CD4-positive, alpha-beta T cell (primary cell): ENCODE measurements at regions of chr17 and their contacts with region 1.

Region 1: DNA sequence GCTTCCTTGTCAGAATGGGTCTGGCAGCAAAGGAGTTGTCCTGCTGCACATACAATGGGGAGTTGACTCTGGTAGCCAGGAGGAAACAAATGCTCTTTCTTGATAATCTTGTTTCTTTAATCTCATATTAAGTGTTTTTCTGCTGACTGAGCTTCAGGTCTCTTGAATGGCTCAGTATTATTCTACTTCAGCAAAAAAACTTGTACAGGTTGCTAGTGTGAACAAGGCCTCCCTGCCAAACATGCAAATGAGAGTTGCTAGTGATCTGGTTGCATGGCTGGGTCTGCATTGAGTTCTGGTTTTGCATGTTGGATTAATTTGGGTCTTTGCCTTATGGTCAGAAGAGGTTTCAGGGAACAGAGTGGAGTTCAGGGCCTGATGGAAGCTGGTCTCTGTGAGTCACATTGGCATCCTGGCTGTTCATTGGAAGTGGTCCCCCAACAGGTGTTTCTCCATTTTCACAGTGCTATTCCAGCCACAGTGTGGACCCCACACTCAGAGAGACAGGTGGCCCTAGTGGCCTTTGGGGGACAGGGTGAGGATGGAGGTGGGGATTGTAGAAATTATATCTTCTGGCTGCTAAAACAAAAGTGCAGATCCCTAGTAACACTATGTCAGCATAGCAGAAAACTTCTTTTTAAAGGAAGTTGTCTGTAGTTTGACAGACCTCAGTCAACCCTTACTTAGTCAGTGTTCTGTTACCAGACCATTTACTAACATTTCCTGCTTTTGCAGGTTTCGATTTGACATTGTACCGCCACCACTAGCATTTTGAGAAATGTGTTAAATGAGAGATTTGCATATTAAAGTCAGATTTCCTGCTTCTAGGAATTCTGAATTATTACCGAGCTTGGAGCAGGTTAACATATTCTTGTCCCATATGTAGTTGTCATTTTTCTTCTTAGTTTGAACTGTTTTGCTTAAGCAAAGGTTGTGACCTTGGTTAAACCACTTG is 47.1 kb downstream of the EPN2 start:
- DNase-seq: peak in 2 of 14 experiments; percentile 12 to 40
- ATAC-seq: peak; percentile 34
- H3K4me3 ChIP-seq: no peak overlapping the region
- H3K4me3 Mint-ChIP-seq: no peak overlapping the region
- H3K27ac ChIP-seq: no peak overlapping the region
- H3K27ac Mint-ChIP-seq: peak overlapping the region; percentile 52
- H3K4me1 ChIP-seq: peaks cover 16% of the 10 kb centered on the region
- H3K4me1 Mint-ChIP-seq: peaks cover 15% of the 10 kb centered on the region
- H3K27me3 ChIP-seq: no peaks in the 10 kb centered on the region
- H3K27me3 Mint-ChIP-seq: peaks cover 10% of the 10 kb centered on the region
- CTCF ChIP-seq: no peak

Region 2: GRCh38 chr17:19260958-19261357 is 23.3 kb before region 1 on chr17:
- CTCF ChIA-PET with region 1: no interaction called
- POLR2A ChIA-PET with region 1: no interaction called
- intact Hi-C with region 1: loop called in 1 of 2 experiments (anchors 1 kb)
- DNase-seq: no peak
- ATAC-seq: no peak
- H3K4me3 ChIP-seq: no peak overlapping the region
- H3K4me3 Mint-ChIP-seq: no peak overlapping the region
- H3K27ac ChIP-seq: no peak overlapping the region
- H3K27ac Mint-ChIP-seq: no peak overlapping the region
- H3K4me1 ChIP-seq: no peaks in the 10 kb centered on the region
- H3K4me1 Mint-ChIP-seq: no peaks in the 10 kb centered on the region
- H3K27me3 ChIP-seq: peaks cover 0 to 3% of the 10 kb centered on the region in 2 experiments
- H3K27me3 Mint-ChIP-seq: peaks cover 35% of the 10 kb centered on the region
- CTCF ChIP-seq: no peak